Activated T-helper 2 cell treated with anti-CD3 and anti-CD28 coated beads, Interferon-gamma antibody, Interleukin-2, Interleukin-4, amounts not matched to agents 10 μg/mL and 5 μg/mL and 100 μg/mL, durations not matched to agents 14 hours and 24 hours and 36 hours (primary cell): ENCODE measurements at regions of chr2 and their contacts with region 1.

Region 1: DNA sequence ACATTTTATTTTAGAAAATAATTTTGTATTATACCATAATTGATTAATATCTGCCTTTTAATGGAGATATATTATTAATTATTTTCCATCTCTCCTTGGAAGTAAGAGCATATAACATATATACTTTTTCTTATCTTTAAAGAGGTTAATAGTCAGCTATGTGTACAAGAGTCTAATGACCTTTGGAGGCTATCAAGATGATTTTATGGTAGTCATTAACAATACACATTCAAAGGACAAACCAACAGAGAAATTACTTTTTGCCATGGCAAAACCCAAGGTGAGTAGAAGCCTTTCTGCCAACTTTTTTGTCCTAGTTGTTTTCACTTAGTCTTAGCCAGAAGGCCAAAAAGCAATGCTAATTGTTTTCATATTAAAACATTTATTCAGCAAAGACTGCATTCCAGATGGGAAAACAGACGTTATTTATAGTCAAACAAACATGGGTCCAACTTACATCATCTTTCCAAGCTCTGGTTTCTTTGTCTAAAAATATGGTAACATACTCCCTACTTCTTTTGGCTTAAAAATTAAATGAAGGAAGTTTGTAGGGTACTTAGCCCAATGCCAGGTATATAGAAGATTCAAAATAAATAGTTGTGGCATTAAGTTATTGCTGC is 9.6 kb upstream of the DYNC2LI1 start:
- DNase-seq: no peak
- H3K4me3 Mint-ChIP-seq: no peak overlapping the region
- H3K27ac Mint-ChIP-seq: peak overlapping the region; percentile 92
- H3K4me1 Mint-ChIP-seq: peaks cover 51% of the 10 kb centered on the region
- H3K27me3 Mint-ChIP-seq: no peaks in the 10 kb centered on the region

Region 2: DNA sequence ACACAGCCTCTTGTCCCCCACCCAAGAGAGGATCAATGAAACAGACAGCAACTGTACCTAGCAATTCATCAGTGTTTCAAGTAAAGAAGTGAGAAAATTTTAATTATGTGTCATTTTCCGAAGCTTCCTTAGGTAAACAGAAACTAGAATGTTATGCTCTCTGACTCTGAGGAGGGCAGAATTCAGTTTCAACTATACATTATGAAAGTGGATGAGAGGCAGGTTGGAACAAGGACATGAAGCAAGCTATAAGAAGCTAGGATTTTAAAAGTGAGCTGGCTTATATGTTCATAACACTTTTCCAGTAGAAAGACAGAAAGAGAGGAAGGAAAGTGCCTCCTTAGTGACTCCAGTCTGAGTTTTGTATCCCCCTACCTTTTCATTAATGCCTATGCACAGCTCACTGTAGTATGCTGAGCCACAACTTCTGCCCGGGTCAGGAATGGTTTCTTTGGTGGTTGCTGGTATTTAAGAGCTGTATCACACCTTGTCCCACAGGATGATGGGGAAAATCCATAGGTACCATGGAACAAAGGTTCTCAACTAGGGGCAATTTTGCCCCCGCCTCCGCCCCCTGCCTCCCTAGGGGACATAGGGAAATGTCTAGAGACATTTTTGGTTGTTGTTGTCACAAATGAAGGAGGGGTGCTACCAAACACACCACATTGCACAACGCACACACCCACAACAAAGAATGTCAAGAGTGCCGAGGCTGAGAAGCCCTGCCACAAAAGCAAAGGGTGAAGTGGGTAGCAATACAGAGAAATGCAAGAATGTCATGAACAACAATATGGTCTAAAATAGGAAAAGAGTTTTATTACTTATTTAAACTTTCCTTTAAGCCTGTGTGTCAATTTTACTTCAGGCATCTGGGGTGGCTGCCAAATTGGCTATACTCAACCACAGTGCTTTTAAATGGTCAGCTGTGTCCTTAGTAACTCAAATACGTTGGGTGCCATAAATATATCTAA is 376.8 kb before region 1 on chr2:
- intact Hi-C with region 1: no loop called
- DNase-seq: no peak
- H3K4me3 Mint-ChIP-seq: peak overlapping the region; percentile 31
- H3K27ac Mint-ChIP-seq: peak overlapping the region; percentile 68
- H3K4me1 Mint-ChIP-seq: peaks cover 40% of the 10 kb centered on the region
- H3K27me3 Mint-ChIP-seq: no peaks in the 10 kb centered on the region

Region 3: DNA sequence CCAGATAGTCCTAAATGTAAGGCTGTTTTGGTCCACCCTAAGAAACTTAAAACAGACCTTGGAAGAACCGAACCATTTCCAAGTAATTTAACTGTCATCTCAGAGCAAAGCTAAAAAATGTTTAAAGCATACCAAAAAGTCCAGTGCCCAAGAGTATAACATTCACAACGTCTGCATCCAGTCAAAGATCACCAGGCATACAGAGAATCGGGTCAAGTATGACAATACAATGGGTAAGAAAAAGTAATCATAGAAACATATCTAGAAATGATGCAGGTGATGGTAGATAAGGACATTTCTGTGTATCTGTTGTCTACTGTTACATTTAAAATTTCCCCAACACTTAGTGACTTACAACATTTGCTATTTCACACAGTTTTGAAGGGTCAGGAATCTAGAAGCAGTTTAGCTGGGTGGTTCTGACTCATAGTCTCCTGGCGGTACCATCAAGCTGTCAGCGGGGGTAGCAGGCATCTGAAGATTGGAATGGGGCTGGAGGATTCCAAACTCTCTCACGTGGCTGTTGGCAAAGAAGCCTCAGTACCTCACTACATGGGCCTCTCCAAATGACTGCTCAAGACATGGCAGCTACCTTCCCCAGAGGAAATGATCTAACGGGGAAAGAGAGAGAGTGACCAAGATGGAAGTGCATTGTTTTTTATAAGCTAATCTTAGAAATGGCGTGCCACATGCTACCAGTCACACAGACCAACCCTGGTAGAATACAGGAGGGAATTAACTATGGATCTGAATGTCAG is 26.9 kb before region 1 on chr2:
- intact Hi-C with region 1: loop called (anchors 1 kb)
- DNase-seq: no peak
- H3K4me3 Mint-ChIP-seq: no peak overlapping the region
- H3K27ac Mint-ChIP-seq: peak overlapping the region; percentile 72
- H3K4me1 Mint-ChIP-seq: peaks cover 16% of the 10 kb centered on the region
- H3K27me3 Mint-ChIP-seq: no peaks in the 10 kb centered on the region

Region 4: DNA sequence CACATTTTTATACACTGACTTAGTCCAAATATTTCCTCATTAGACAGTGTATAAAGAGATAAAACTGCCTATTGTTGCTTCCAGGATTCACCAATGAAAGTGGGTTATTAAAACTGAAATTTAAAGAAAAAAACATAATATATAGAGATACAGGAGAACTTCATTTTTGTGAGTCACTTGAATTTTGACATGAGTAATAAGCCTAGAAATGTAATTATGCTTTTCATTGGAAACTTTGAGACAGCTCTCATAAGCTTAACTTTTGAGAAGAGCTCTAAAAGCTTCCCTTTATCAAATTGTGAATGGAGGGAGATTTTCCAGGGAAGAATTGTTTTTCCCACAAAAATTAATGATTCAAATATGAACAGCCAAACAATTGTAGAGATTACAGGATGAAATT is 23.7 kb after region 1 on chr2:
- intact Hi-C with region 1: loop called (anchors 1 kb)
- DNase-seq: no peak
- H3K4me3 Mint-ChIP-seq: no peak overlapping the region
- H3K27ac Mint-ChIP-seq: peak overlapping the region; percentile 81
- H3K4me1 Mint-ChIP-seq: peaks cover 33% of the 10 kb centered on the region
- H3K27me3 Mint-ChIP-seq: no peaks in the 10 kb centered on the region

Region 5: GRCh38 chr2:43818761-43819160 is 54.6 kb after region 1 on chr2:
- intact Hi-C with region 1: no loop called
- DNase-seq: no peak
- H3K4me3 Mint-ChIP-seq: no peak overlapping the region
- H3K27ac Mint-ChIP-seq: peak overlapping the region; percentile 24
- H3K4me1 Mint-ChIP-seq: peaks cover 10% of the 10 kb centered on the region
- H3K27me3 Mint-ChIP-seq: no peaks in the 10 kb centered on the region

Region 6: DNA sequence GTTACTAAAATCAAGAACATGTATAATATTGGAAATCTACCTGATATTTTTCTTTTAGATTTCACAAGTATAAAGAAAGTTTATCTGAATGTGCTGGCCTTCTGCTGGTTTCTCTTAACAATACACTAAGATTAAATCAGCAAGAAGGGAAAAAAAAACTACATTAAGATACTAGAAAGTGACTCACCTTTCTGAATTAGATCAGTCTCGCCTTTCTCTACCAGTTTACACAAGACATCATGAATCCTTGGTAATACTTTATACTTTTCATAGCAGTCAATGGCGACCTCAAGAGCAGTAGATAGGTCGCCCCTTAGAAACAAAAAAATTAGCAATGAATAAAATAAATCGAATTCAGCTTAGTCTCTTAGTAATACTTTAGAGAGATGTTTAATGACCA is 170.4 kb after region 1 on chr2:
- intact Hi-C with region 1: loop called (anchors 5 kb)
- DNase-seq: no peak
- H3K4me3 Mint-ChIP-seq: no peak overlapping the region
- H3K27ac Mint-ChIP-seq: peak overlapping the region; percentile 86
- H3K4me1 Mint-ChIP-seq: peaks cover 26% of the 10 kb centered on the region
- H3K27me3 Mint-ChIP-seq: no peaks in the 10 kb centered on the region